ENCODE measurements at regions of chr1 and their contacts with region 1.

Region 1: GRCh38 chr1:108852221-108852975 is 4.5 kb downstream of the AKNAD1 start:
- DNase-seq: no peak
- ATAC-seq: peak; percentile 51
- H3K4me3 Mint-ChIP-seq: no peak overlapping the region
- H3K27ac Mint-ChIP-seq: peak overlapping the region; percentile 31
- H3K4me1 Mint-ChIP-seq: peaks cover 20% of the 10 kb centered on the region
- H3K27me3 Mint-ChIP-seq: peaks cover 25% of the 10 kb centered on the region

Region 2: GRCh38 chr1:108661030-108661620 is 191.3 kb before region 1 on chr1 and contains the start of gene HENMT1:
- CTCF ChIA-PET with region 1: no interaction called
- POLR2A ChIA-PET with region 1: no interaction called
- DNase-seq: peak; percentile 84
- ATAC-seq: peak; percentile 86
- H3K4me3 Mint-ChIP-seq: peak within 1 kb of the TSS; percentile 85
- H3K27ac Mint-ChIP-seq: peak within 1 kb of the TSS; percentile 97
- H3K4me1 Mint-ChIP-seq: peaks cover 51% of the 10 kb centered on the region
- H3K27me3 Mint-ChIP-seq: no peaks in the 10 kb centered on the region
- total RNA-seq, gene HENMT1: 38.7 to 40.5 TPM

Region 3: DNA sequence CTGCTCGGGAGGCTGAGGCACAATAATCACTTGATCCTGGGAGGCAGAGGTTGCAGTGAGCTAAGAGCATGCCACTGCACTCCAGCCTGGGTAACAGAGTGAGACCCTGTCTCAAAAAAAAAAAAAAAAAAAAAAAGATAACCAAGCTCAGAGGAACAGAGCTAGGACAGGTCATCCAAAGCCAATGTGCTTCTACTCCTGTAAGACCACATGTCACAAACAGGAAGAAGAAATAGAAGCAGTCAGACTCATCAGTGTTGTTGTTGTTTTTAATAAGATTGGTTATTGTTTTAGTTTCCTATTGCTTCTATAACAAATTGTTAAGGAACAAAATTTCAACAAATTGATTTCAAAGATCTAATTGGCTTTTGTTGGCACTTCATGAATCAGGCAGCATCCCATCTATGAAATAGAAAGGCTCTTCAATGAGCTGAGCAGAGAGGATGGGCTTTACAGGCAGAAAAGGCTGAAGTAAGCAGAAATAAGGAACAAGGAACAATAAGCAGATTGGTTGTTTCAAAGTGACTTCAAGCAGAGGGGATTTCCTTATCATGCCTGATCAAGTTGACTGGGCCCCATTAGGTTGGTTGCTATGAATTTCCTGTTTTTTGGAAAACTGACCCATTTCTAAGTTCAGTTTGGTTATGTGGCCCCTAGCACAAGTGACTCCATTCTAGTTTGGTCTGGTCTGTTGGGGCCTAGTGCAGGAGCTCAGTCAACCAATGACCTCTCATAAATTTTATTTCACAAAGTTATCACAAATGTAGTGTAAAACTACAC is 10.5 kb after region 1 on chr1:
- CTCF ChIA-PET with region 1: interaction called, 10 read pairs
- POLR2A ChIA-PET with region 1: no interaction called
- DNase-seq: no peak
- ATAC-seq: no peak
- H3K4me3 Mint-ChIP-seq: no peak overlapping the region
- H3K27ac Mint-ChIP-seq: no peak overlapping the region
- H3K4me1 Mint-ChIP-seq: peaks cover 9% of the 10 kb centered on the region
- H3K27me3 Mint-ChIP-seq: peaks cover 20% of the 10 kb centered on the region

Measured in activated CD8-positive, alpha-beta T cell treated with anti-CD3 and anti-CD28 coated beads, Interleukin-2, amount 10 ng/mL, durations not matched to agents 7 days and 5 days (primary cell).